ENCODE measurements at regions of chr5 and their contacts with region 1.

Region 1: GRCh38 chr5:112372539-112372938 is 46.5 kb downstream of the EPB41L4A start:
- DNase-seq: no peak
- ATAC-seq: no peak
- H3K4me3 ChIP-seq: no peak overlapping the region
- H3K27ac ChIP-seq: no peak overlapping the region
- H3K4me1 ChIP-seq: peaks cover 2 to 78% (median 27%) of the 10 kb centered on the region in 9 donors
- H3K27me3 ChIP-seq: no peaks in the 10 kb centered on the region
- CTCF ChIP-seq: no peak

Region 2: GRCh38 chr5:112412346-112412745 is 39.8 kb after region 1 on chr5:
- intact Hi-C with region 1: loop called in 2 of 10 experiments (anchors 5 kb)
- DNase-seq: no peak
- ATAC-seq: peak in 1 of 8 donors; percentile 14
- H3K4me3 ChIP-seq: no peak overlapping the region
- H3K27ac ChIP-seq: no peak overlapping the region
- H3K4me1 ChIP-seq: peaks cover 0 to 64% (median 47%) of the 10 kb centered on the region in 9 donors
- H3K27me3 ChIP-seq: peaks cover 0 to 10% (median 0%) of the 10 kb centered on the region in 7 donors
- CTCF ChIP-seq: no peak

Region 3: GRCh38 chr5:112733586-112733985 is 361.0 kb after region 1 on chr5:
- intact Hi-C with region 1: no loop called
- DNase-seq: no peak
- ATAC-seq: no peak
- H3K4me3 ChIP-seq: no peak overlapping the region
- H3K27ac ChIP-seq: no peak overlapping the region
- H3K4me1 ChIP-seq: peaks cover 0 to 26% (median 14%) of the 10 kb centered on the region in 9 donors
- H3K27me3 ChIP-seq: no peaks in the 10 kb centered on the region
- CTCF ChIP-seq: no peak

Measured in heart right ventricle (tissue), 16 donors.